ENCODE measurements at regions of chr4 and their contacts with region 1.

Region 1: GRCh38 chr4:82900331-82901128 is at the start of gene THAP9:
- DNase-seq: peak; percentile 99
- ATAC-seq: peak; percentile 92
- H3K4me3 Mint-ChIP-seq: no peak within 1 kb of the TSS
- H3K27ac Mint-ChIP-seq: no peak within 1 kb of the TSS
- H3K4me1 Mint-ChIP-seq: peaks cover 39% of the 10 kb centered on the region
- H3K27me3 Mint-ChIP-seq: no peaks in the 10 kb centered on the region
- total RNA-seq, gene THAP9: 1.7 to 2.6 TPM

Region 2: DNA sequence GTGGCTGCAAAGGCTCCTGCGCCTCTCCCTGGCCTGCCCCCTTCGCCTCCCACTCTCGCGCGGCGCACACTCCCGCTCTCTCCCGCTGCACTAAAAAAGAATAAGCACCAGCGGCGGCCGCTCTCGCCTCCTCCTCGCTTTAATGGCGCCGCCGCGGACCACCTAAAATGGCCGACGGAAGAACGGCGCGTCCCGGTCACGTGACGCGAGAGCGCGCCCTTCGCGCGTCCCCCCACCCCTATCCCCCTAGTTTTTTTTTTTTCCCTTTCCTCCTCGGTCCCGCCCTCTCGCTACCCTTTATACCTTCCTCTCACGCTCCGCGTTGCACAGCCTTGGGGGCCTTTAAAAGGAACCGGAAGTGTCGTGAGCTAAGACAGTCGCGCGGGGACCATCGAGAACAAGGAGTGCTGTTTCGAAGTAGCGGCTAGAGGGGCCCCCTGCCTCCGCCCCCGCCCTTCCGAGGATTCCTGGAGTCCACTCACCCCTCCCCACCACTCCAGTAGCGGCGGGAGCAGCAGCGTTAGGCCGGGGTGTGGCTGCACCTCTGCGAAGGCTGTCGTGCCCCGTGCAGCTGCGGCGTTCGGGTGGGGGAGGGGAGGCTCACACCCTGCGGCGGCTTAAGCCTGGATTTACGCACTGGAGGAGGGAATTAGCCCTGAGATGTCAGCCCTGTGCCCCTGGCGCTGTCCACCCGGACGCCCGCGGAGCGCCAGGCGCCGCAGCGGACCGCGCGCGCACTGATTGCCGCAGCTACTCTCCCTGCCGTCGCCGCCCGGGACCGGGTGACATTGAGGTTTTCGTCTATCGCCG is 526.5 kb before region 1 on chr4 and contains the start of gene HNRNPD:
- CTCF ChIA-PET with region 1: no interaction called
- POLR2A ChIA-PET with region 1: interaction called, 3 read pairs
- intact Hi-C with region 1: loop called in 1 of 2 experiments (anchors 1 kb)
- DNase-seq: peak; percentile 97
- ATAC-seq: peak; percentile 90
- H3K4me3 Mint-ChIP-seq: peak within 1 kb of the TSS; percentile 89
- H3K27ac Mint-ChIP-seq: peak within 1 kb of the TSS; percentile 99
- H3K4me1 Mint-ChIP-seq: peaks cover 34% of the 10 kb centered on the region
- H3K27me3 Mint-ChIP-seq: no peaks in the 10 kb centered on the region
- total RNA-seq, gene HNRNPD: 505 to 510 TPM

Region 3: GRCh38 chr4:83012687-83013419 is 112.3 kb after region 1 on chr4:
- CTCF ChIA-PET with region 1: interaction called, 6 read pairs
- POLR2A ChIA-PET with region 1: interaction called, 8 read pairs
- intact Hi-C with region 1: loop called (anchors 1 kb)
- DNase-seq: peak; percentile 99
- ATAC-seq: peak; percentile 88
- H3K4me3 Mint-ChIP-seq: peak overlapping the region; percentile 99
- H3K27ac Mint-ChIP-seq: peak overlapping the region; percentile 93
- H3K4me1 Mint-ChIP-seq: peaks cover 31% of the 10 kb centered on the region
- H3K27me3 Mint-ChIP-seq: no peaks in the 10 kb centered on the region

Region 4: DNA sequence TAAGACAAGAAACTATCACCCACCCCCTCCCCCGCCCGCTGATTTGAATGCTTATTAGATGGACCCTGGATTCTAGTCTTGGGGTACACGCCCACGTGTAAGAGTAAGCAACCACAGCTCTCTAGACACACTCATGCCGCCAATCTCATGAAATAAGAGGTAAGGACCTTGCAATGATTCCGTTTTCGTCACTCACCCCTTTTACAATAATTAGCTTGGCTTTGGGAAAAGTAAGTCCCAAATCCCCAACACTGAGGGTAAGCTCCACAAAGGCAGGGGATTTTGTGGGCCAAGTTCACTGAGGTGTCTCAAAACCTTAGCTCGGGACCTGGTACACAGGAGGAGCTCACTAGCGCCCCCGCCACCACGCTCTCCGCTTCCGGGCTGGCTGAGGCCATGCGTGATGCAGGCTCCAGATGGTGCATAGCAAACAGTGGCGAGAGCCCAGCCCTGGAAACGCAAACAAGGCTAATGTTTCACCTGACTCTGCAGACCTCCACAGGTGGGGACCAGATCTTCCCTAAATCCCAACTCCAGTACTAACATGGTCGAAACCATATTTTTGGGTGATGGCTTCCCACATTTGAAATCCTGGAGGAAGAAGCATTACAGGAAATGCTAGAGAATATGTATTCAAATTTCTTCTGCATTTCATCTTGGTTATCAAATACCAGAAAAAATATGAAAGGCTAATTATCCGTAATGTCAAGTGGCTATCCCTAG is 209.9 kb after region 1 on chr4:
- CTCF ChIA-PET with region 1: interaction called, 4 read pairs
- POLR2A ChIA-PET with region 1: interaction called, 3 read pairs
- intact Hi-C with region 1: loop called in 1 of 2 experiments (anchors 2 kb)
- DNase-seq: peak; percentile 96
- ATAC-seq: peak; percentile 81
- H3K4me3 Mint-ChIP-seq: peak overlapping the region; percentile 91
- H3K27ac Mint-ChIP-seq: peak overlapping the region; percentile 96
- H3K4me1 Mint-ChIP-seq: peaks cover 49% of the 10 kb centered on the region
- H3K27me3 Mint-ChIP-seq: no peaks in the 10 kb centered on the region

Region 5: DNA sequence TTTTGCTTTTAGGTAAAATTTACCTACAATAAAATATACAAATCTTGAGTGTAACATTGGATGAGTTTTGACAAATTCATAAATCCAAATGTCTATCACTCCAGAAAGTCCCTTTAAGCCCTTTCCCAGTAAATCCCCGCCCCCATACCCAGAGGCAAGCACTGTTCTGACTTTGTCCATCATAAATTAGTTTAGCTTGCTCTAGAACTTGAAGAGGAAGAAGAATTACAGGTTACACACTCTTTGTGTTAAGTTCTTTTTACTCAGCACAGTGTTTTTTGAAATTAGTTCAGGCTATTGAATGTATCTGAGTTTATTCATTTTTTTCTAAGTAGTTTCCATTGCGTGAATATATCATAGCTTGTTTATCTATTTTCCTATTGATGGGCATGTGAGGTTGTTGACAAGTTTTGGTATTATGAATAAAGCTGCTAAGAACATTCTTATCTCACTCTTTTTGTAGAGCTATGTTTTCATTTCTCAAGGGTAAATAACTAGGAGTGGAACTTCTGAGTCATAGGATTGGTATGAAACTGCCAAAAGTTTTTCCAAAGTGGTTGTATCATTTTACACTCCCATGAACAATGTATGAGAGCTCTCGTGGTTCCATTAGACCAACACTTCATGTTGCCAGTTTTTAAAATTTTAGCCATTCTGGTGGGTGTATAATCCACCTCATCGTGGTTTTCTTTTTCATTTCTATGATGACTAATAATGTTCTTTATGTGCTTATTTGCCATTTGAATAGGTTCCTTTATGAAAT is 456.6 kb after region 1 on chr4:
- CTCF ChIA-PET with region 1: no interaction called
- POLR2A ChIA-PET with region 1: interaction called, 5 read pairs
- intact Hi-C with region 1: loop called (anchors 2 to 10 kb)
- DNase-seq: peak; percentile 52
- ATAC-seq: peak; percentile 91
- H3K4me3 Mint-ChIP-seq: no peak overlapping the region
- H3K27ac Mint-ChIP-seq: peak overlapping the region; percentile 72
- H3K4me1 Mint-ChIP-seq: peaks cover 23% of the 10 kb centered on the region
- H3K27me3 Mint-ChIP-seq: no peaks in the 10 kb centered on the region

Measured in activated CD4-positive, alpha-beta T cell treated with anti-CD3 and anti-CD28 coated beads for 36 hours (primary cell).